Spleen (tissue), 13 donors: ENCODE measurements at regions of chr17 and their contacts with region 1.

Region 1: DNA sequence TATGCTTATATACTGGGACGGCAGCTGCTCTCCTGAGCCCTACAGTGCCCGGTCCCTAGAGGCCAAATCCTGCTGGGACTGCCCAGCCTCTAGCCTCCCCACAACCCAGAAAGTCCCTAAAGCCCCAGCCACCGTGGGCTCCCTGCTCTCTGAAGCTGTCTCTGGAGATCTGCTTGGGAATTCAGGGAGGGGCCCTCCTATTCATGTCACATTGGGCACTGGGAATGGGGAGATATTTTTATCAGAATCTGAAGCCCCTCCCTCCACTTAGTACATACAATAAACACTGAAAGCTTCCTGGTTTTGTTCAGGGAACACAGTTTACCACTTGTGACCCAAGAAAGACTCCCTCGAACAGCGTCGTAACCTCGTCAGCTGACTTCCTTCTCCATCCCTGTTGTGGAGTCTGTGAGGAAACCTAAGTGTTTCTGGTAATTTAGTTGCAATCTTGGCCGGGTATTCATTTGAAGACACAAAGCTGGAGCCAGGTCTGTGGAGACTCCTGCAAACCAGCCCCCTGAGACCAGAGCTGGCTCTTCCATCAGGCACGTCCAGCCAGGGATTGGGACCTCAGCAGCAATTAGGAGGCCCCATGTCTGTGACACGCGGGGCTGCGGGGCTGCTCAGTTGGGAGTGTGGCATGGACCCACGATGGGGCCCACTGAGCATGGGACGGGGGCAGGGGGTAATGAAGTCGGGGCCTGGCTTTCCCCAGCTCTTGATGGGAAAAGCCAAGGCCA is 38.5 kb downstream of the PGS1 start:
- DNase-seq: no peak
- H3K4me3 ChIP-seq: peak overlapping the region in 3 of 8 donors; percentile 20 to 56 (median 33)
- H3K27ac ChIP-seq: peak overlapping the region; percentile 82 to 97 (median 91)
- H3K4me1 ChIP-seq: peaks cover 57 to 100% (median 87%) of the 10 kb centered on the region in 6 donors
- H3K27me3 ChIP-seq: no peaks in the 10 kb centered on the region
- CTCF ChIP-seq: no peak
- POLR2A ChIP-seq: peak in 1 of 3 donors; percentile 14

Region 2: DNA sequence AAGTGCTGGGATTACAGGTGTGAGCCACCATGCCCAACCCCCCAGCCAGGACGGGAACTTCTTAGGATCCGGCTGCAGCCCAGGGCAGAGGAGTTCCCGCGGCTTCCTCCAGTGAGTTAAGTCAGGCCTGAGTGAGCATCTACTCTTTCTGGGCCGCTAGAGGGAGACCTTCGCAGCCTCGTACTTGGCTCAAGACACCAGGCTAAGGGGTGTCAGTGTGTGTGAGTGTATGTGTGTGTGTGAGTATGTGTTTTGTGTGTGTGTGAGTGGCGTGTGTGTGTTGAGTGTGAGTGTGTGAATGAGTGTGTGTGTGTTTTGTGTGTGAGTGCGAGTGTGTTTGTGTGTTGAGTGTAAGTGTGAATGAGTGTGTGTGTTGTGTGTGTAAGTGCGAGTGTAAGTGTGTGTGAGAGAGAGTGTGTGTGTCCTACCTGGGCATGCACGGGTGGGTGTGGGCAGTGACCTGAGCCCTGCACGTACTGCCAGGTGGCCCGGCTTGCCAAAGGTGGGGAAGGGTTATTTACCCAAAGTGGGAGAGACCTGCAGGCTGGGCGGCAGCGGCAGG is 127.1 kb before region 1 on chr17:
- intact Hi-C with region 1: loop called (anchors 5 kb)
- DNase-seq: peak; percentile 91
- H3K4me3 ChIP-seq: no peak overlapping the region
- H3K27ac ChIP-seq: no peak overlapping the region
- H3K4me1 ChIP-seq: peaks cover 0 to 29% (median 10%) of the 10 kb centered on the region in 6 donors
- H3K27me3 ChIP-seq: no peaks in the 10 kb centered on the region
- CTCF ChIP-seq: peak; percentile 70 to 97 (median 86)
- POLR2A ChIP-seq: no peak

Region 3: DNA sequence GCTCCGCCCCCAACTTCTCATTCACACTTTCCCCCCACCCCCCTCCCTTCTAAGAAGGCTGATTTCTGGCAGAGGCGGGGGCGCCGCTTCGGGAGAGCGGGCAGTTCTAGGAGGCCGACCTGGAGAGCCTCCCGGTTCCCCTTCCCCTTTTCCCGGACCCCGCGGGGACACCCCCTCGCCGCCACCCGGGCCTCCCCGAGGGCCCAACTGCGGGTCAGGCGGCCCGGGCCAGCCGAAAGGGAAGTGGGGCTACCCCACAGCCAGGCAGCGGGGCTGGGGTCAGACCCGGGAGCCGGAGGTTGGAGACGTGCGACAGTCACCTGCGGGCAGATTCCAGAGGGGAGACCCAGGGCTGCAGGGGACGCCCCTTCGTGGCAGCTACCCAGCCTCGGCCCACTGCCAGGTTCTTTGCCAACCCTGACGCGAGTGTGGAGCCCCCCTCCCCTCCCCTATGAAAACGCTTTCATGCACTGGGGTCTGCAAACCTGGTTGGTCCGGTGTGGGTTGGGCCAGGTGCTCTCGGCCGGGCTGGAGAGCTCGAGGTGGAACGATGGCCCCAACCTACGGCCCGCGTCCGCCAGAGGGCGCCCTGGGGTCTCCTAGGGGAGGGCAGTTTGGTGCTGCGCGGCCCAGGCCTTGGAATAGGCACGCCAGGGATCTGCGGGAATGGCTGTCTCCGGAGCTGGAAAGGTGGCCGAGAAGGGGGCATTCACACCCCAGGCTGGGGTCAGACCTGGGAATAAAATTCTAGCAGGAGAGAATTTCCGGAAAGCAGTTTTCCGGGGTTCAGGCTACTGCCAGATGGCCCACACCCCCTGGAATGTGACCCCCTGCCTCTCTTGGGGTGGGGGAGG is 56.4 kb before region 1 on chr17:
- intact Hi-C with region 1: loop called (anchors 5 kb)
- DNase-seq: peak; percentile 99
- H3K4me3 ChIP-seq: peak overlapping the region; percentile 37 to 94 (median 86)
- H3K27ac ChIP-seq: peak overlapping the region; percentile 66 to 98 (median 96)
- H3K4me1 ChIP-seq: peaks cover 33 to 70% (median 60%) of the 10 kb centered on the region in 6 donors
- H3K27me3 ChIP-seq: peaks cover 0 to 33% (median 0%) of the 10 kb centered on the region in 7 donors
- CTCF ChIP-seq: peak; percentile 94 to 98 (median 96)
- POLR2A ChIP-seq: no peak